ENCODE measurements at regions of chr2 and their contacts with region 1.

Region 1: GRCh38 chr2:46174345-46175170 is 122.6 kb upstream of the EPAS1 start:
- DNase-seq: no peak
- H3K4me3 ChIP-seq: no peak overlapping the region
- H3K27ac ChIP-seq: no peak overlapping the region
- H3K4me1 ChIP-seq: no peaks in the 10 kb centered on the region
- H3K27me3 ChIP-seq: no peaks in the 10 kb centered on the region
- CTCF ChIP-seq: no peak

Region 2: DNA sequence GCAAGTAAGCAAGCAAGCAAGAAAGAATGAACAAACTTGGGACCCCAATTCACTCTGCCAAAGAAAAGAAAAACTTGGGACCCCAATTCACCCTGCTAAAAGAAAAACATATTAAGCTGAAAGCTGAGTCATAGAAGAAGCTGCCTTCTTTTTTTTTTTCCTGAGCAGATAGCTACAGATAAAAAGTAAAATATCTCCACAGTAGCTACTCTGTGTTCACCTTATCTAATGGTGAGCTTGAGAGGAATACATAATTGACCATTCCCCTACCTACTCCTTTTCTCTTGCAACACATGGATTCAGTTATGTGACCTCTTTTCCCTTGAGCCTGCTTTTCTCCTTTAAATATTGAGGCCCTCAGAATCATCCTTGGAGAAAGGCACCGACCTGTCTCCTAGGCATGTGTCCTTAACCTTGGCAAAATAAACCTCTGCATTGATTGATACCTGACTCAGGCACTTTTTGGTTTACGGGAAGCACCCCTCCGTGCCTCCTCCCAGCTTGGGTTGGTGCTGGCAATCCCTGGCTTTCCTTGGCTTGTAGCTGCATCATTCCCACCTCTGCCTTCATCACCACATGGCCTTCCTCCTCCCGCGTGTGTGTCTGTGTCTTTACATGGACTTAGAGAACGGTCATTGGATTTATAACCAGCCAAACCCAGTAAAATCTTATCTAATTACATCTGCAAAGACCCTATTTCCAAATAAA is 678.2 kb after region 1 on chr2:
- CTCF ChIA-PET with region 1: no interaction called
- POLR2A ChIA-PET with region 1: interaction called, 11 read pairs
- intact Hi-C with region 1: no loop called
- DNase-seq: no peak
- H3K4me3 ChIP-seq: no peak overlapping the region
- H3K27ac ChIP-seq: no peak overlapping the region
- H3K4me1 ChIP-seq: peaks cover 31% of the 10 kb centered on the region
- H3K27me3 ChIP-seq: no peaks in the 10 kb centered on the region
- CTCF ChIP-seq: no peak

Measured in A673 (cell line).